ENCODE measurements at regions of chr2 and their contacts with region 1.

Region 1: DNA sequence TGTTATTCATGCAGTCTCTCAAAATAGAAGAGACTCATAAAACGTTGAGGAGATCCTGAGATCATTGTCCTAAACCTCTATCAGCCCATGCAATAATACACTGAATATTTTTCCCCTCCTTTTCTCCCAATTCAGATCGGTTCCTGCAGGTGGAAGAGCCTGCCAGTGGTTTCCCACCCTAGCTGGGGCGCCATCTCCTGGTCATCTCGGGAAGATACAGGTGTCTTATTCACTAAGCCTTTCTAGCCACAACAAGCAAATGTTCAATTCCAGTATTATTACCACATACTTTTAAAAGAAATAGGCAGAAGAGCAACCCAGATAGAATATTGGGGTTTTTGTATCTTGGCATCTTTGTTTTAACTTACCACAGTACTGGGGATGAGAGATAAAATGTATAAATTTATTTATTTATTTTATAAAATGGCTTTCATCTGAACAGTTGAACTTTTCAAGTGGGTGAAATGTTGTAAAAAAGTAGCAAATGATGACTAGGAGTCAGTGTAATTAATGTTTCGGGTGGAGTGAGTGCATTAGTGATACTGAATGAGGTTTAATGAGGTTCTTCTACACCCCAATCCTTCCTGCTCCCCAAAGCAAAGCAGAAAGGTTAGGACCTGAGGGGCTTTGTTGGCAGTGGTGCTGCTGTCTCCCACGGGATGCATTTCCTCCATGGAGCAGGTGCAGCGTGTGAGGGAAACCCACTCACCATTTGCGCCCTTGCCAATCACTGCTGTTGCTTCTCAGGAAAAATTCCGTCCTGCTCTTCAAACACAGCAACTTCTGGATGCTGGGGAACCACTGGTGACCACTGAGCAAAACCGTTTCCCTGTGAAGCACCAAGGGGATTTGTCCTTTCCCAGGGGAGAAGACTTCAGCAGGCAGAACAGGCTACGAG is 147.1 kb upstream of the FHL2 start:
- DNase-seq: peak; percentile 59 to 80 (median 78)
- H3K4me3 ChIP-seq: no peak overlapping the region
- H3K27ac ChIP-seq: no peak overlapping the region
- H3K4me1 ChIP-seq: no peaks in the 10 kb centered on the region
- H3K27me3 ChIP-seq: no peaks in the 10 kb centered on the region
- CTCF ChIP-seq: peak; percentile 57 to 69 (median 63)
- EP300 ChIP-seq: no peak
- POLR2A ChIP-seq: no peak

Region 2: DNA sequence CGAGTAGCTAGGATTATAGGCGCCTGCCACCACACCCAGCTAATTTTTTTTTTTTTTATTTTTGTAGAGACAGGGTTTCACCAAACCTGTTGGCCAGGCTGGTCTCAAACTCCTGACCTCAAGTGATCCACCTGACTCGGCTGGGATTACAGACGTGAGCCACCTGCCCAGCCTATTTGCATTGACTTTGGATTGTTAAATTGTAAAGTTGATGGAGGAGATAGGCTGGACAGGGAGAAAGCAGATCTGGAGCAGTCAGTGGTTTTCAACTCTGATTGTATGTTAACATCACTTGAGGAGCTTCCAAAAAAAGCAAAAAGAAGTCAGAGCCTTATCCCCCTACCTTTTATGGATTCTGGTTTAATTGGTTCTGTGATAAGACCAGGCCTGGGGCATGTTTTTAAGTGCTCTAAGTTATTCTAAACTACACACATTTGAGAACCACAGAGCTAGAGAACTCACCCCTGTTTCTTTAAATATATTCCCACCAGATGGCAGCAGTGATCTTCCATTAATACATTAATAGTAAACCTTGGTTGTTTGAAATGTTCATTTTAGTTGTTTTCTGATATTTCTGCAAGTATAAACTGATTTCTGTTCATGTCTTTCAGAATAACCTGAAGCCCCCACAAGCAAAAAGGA is 201.2 kb before region 1 on chr2:
- intact Hi-C with region 1: loop called in 1 of 4 experiments (anchors 10 kb)
- DNase-seq: no peak
- H3K4me3 ChIP-seq: no peak overlapping the region
- H3K27ac ChIP-seq: no peak overlapping the region
- H3K4me1 ChIP-seq: no peaks in the 10 kb centered on the region
- H3K27me3 ChIP-seq: no peaks in the 10 kb centered on the region
- CTCF ChIP-seq: peak; percentile 11 to 62 (median 54)
- EP300 ChIP-seq: no peak
- POLR2A ChIP-seq: no peak

Measured in ovary (tissue), 10 donors.